AG04450 (cell line): ENCODE measurements at regions of chr1 and their contacts with region 1.

Region 1: DNA sequence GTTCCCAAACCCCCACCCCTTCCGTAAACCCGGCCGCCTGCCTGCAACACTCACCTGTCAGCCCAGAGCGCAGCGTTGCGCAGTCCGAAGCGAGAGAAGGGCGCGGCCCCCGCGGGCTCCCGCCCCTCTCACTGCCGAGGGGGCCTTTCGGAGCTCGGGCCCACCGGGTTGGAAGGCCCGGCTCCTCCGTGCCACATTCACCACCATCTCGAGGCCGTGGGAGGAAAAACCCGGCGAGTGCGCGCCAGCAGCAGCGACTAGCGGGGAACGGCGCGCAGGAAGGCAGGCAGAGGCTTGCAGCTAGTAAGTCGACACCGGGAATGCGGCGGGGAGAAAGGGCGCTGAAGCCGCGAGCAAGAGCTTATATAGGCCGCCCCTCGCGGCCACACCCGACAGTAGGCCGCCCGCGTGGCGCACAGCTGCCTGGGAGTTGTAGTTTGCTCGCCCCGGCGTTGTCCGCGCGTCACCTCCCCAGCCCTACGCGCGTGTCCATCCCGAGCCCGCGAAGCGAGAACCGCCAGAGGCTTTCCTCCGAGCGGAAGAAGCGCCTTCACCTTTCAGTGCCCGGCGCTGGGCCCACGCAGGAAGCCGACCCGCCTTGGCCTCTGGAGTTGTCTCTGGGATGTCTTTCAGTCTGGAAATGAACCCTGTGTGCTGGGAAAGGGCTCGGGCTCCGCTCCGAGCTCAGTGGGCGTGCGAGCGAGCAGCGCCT is 10.4 kb upstream of the RAB42 start:
- DNase-seq: peak; percentile 91
- H3K4me3 ChIP-seq: peak overlapping the region; percentile 73
- H3K27ac ChIP-seq: peak overlapping the region; percentile 77
- H3K27me3 ChIP-seq: no peaks in the 10 kb centered on the region
- CTCF ChIP-seq: peak; percentile 1; the same call in 1 of the 2 replicates

Region 2: GRCh38 chr1:28229089-28229488 is 352.6 kb before region 1 on chr1:
- CTCF ChIA-PET with region 1: no interaction called
- POLR2A ChIA-PET with region 1: no interaction called
- DNase-seq: no peak
- H3K4me3 ChIP-seq: no peak overlapping the region
- H3K27ac ChIP-seq: no peak overlapping the region
- H3K27me3 ChIP-seq: no peaks in the 10 kb centered on the region
- CTCF ChIP-seq: no peak

Region 3: DNA sequence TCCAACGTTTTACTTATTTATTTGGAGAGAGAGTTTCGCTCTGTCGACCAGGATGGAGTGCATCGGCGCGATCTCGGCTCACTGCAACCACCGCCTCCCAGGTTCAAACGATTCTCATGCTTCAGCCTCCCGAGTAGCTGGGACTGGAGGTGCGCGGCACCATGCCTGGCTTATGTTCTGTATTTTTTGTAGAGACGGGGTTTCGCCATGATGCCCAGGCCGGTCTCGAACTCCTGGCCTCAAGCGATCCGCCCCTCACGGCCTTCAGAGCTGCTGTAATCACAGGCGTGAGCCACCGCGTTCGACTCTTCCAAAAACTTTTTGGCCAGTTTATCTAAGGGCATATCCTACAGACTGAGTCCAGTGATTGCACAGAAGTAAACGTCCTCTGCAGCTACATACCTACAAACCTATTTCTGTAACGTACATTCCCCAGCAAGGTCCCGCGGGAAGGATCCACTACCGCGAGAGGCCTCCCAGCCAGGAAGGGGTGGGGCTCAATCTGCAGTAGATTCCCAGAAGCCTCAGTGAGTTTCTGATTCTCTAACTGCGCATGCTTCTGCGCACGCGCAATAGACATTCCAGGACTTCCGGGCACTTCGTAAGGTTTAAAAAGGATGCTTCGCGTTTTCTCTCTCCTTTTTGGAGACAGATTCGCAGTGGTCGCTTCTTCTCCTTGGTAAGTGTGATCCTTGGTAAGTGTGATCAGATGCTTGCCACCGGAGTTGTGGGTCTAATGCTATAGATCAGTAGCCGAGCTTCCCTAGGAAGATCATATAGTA is 76.1 kb before region 1 on chr1 and contains the start of gene RCC1:
- CTCF ChIA-PET with region 1: no interaction called
- POLR2A ChIA-PET with region 1: interaction called, 13 read pairs
- DNase-seq: peak; percentile 98
- H3K4me3 ChIP-seq: peak within 1 kb of the TSS; percentile 95
- H3K27ac ChIP-seq: peak within 1 kb of the TSS; percentile 89
- H3K27me3 ChIP-seq: no peaks in the 10 kb centered on the region
- CTCF ChIP-seq: 0 out of 2 replicates have a peak, but pooled peaks have one; percentile 4
- polyA plus RNA-seq, gene RCC1: 22.4 and 24.0 TPM in 2 replicates

Region 4: GRCh38 chr1:28552758-28553663 is 28.7 kb before region 1 on chr1 and contains the start of gene TRNAU1AP:
- CTCF ChIA-PET with region 1: no interaction called
- POLR2A ChIA-PET with region 1: interaction called, 75 read pairs
- DNase-seq: peak; percentile 92
- H3K4me3 ChIP-seq: peak within 1 kb of the TSS; percentile 96
- H3K27ac ChIP-seq: peak within 1 kb of the TSS; percentile 70
- H3K27me3 ChIP-seq: no peaks in the 10 kb centered on the region
- CTCF ChIP-seq: no peak
- polyA plus RNA-seq, gene TRNAU1AP: 29.4 and 30.1 TPM in 2 replicates

Region 5: GRCh38 chr1:28602536-28603439 is 21.1 kb after region 1 on chr1:
- CTCF ChIA-PET with region 1: interaction called, 11 read pairs
- POLR2A ChIA-PET with region 1: interaction called, 95 read pairs
- DNase-seq: peak; percentile 55
- H3K4me3 ChIP-seq: no peak overlapping the region
- H3K27ac ChIP-seq: peak overlapping the region; percentile 85
- H3K27me3 ChIP-seq: no peaks in the 10 kb centered on the region
- CTCF ChIP-seq: peak; percentile 83

Region 6: GRCh38 chr1:28642847-28643635 is 61.3 kb after region 1 on chr1 and contains the start of gene TAF12:
- CTCF ChIA-PET with region 1: no interaction called
- POLR2A ChIA-PET with region 1: interaction called, 41 read pairs
- DNase-seq: peak; percentile 86
- H3K4me3 ChIP-seq: peak within 1 kb of the TSS; percentile 98
- H3K27ac ChIP-seq: peak within 1 kb of the TSS; percentile 89
- H3K27me3 ChIP-seq: no peaks in the 10 kb centered on the region
- CTCF ChIP-seq: peak; percentile 30; the same call in 1 of the 2 replicates
- polyA plus RNA-seq, gene TAF12: 50.2 and 54.2 TPM in 2 replicates

Region 7: DNA sequence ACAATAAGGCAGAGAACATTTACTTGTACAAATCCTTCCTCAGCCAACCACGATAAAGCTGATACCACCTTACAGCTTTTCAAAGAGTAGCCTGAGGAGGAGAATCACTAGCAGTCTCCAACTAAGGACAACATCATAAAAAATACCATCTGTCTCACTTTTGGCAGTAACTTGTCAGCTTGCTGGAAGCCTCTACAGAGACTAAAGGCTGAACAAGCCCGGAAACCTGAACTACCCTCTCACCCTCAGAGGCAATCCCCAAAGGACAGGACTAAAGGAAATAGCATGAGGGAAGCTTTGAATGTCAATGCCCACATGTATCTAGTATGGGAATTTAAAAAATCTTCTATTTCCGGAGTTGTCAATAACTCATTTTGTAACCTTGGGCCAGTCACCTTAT is 589.4 kb after region 1 on chr1:
- CTCF ChIA-PET with region 1: no interaction called
- POLR2A ChIA-PET with region 1: no interaction called
- DNase-seq: no peak
- H3K4me3 ChIP-seq: no peak overlapping the region
- H3K27ac ChIP-seq: no peak overlapping the region
- H3K27me3 ChIP-seq: no peaks in the 10 kb centered on the region
- CTCF ChIP-seq: no peak